MCF 10A (cell line): ENCODE measurements at regions of chr11 and their contacts with region 1.

Region 1: GRCh38 chr11:93921695-93922468 is 71.5 kb upstream of the VSTM5 start:
- DNase-seq: peak; percentile 84
- H3K4me3 Mint-ChIP-seq: no peak overlapping the region
- H3K27ac Mint-ChIP-seq: no peak overlapping the region
- H3K4me1 Mint-ChIP-seq: no peaks in the 10 kb centered on the region
- H3K27me3 Mint-ChIP-seq: no peaks in the 10 kb centered on the region
- CTCF ChIP-seq: peak; percentile 78

Region 2: GRCh38 chr11:93908689-93909088 is 13.2 kb before region 1 on chr11:
- CTCF ChIA-PET with region 1: interaction called, 22 read pairs
- POLR2A ChIA-PET with region 1: no interaction called
- intact Hi-C with region 1: no loop called
- DNase-seq: peak; percentile 40
- H3K4me3 Mint-ChIP-seq: no peak overlapping the region
- H3K27ac Mint-ChIP-seq: peak overlapping the region; percentile 8
- H3K4me1 Mint-ChIP-seq: peaks cover 18% of the 10 kb centered on the region
- H3K27me3 Mint-ChIP-seq: no peaks in the 10 kb centered on the region
- CTCF ChIP-seq: no peak

Region 3: DNA sequence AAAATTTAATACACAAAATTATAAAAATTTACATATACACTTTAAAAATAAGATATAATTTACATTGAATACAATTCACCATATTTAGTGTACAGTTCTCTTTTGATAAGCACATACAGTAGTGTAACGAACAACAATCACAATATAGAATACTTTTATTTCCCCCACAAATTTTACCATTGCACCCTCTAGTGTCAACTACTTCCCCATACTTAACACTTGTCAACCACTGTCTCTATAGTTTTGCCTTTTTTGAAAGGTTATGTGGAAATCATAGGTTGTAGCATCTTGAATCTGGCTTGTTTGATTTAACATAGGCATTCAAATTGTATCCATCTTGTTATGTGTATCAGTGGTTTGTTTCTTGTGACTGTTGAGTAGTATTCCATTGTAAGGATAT is 185.5 kb after region 1 on chr11:
- CTCF ChIA-PET with region 1: interaction called, 12 read pairs
- POLR2A ChIA-PET with region 1: interaction called, 3 read pairs
- intact Hi-C with region 1: loop called (anchors 1 kb)
- DNase-seq: peak; percentile 42
- H3K4me3 Mint-ChIP-seq: no peak overlapping the region
- H3K27ac Mint-ChIP-seq: no peak overlapping the region
- H3K4me1 Mint-ChIP-seq: no peaks in the 10 kb centered on the region
- H3K27me3 Mint-ChIP-seq: no peaks in the 10 kb centered on the region
- CTCF ChIP-seq: peak; percentile 39

Region 4: DNA sequence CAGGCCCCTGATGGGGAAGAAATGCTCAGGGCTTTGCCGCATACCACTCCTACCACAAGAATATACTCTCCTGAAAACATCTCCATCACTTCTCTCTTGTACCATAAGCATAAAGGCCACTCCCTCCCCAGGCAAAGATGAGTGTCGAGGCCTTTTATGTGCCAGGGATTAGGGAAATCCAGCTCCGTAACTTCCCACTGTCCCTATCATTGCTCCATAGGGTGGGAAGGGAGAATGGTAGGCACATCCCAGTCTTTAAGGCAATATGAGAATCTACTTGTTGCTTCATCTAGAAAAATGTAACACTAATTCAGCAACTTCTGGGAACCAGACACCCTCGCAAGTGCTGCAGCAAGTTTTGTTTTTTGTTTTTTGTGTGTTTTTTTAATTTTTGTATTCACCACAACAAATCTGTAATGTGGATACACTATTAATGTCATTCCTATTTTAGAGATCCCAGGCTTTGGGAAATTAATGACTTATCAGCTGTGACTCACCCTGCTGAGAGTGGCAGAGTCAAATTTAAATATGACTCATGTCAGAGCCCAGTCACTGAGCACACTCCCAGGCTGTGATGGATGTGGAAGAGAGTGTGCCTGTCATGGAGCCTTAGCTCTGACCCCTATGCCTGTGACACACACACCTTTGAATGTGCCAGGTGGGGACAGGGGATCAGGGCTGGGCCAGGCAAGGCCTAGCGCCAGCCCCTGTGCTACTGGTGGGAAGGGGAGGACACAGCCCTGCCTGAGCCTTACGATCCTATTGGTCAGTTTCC is 230.2 kb after region 1 on chr11:
- CTCF ChIA-PET with region 1: interaction called, 11 read pairs
- POLR2A ChIA-PET with region 1: no interaction called
- intact Hi-C with region 1: no loop called
- DNase-seq: peak; percentile 88
- H3K4me3 Mint-ChIP-seq: no peak overlapping the region
- H3K27ac Mint-ChIP-seq: no peak overlapping the region
- H3K4me1 Mint-ChIP-seq: peaks cover 57% of the 10 kb centered on the region
- H3K27me3 Mint-ChIP-seq: no peaks in the 10 kb centered on the region
- CTCF ChIP-seq: no peak

Region 5: GRCh38 chr11:94504689-94505293 is 582.9 kb after region 1 on chr11:
- CTCF ChIA-PET with region 1: interaction called, 10 read pairs
- POLR2A ChIA-PET with region 1: no interaction called
- intact Hi-C with region 1: loop called (anchors 1 kb)
- DNase-seq: peak; percentile 61
- H3K4me3 Mint-ChIP-seq: no peak overlapping the region
- H3K27ac Mint-ChIP-seq: no peak overlapping the region
- H3K4me1 Mint-ChIP-seq: no peaks in the 10 kb centered on the region
- H3K27me3 Mint-ChIP-seq: no peaks in the 10 kb centered on the region
- CTCF ChIP-seq: peak; percentile 34